ENCODE measurements at regions of chr2 and their contacts with region 1.

Region 1: GRCh38 chr2:48471048-48471474 is 58.9 kb upstream of the STON1 start:
- DNase-seq: peak; percentile 41
- H3K4me3 ChIP-seq: no peak overlapping the region
- H3K27me3 ChIP-seq: no peaks in the 10 kb centered on the region
- CTCF ChIP-seq: peak; percentile 68

Region 2: GRCh38 chr2:48414980-48415835 is 55.9 kb before region 1 on chr2:
- CTCF ChIA-PET with region 1: no interaction called
- POLR2A ChIA-PET with region 1: no interaction called
- DNase-seq: no peak
- H3K4me3 ChIP-seq: no peak overlapping the region
- H3K27me3 ChIP-seq: no peaks in the 10 kb centered on the region
- CTCF ChIP-seq: no peak

Region 3: GRCh38 chr2:48448274-48449061 is 22.6 kb before region 1 on chr2:
- CTCF ChIA-PET with region 1: interaction called, 11 read pairs
- POLR2A ChIA-PET with region 1: no interaction called
- DNase-seq: peak; percentile 76
- H3K4me3 ChIP-seq: no peak overlapping the region
- H3K27me3 ChIP-seq: no peaks in the 10 kb centered on the region
- CTCF ChIP-seq: no peak

Region 4: DNA sequence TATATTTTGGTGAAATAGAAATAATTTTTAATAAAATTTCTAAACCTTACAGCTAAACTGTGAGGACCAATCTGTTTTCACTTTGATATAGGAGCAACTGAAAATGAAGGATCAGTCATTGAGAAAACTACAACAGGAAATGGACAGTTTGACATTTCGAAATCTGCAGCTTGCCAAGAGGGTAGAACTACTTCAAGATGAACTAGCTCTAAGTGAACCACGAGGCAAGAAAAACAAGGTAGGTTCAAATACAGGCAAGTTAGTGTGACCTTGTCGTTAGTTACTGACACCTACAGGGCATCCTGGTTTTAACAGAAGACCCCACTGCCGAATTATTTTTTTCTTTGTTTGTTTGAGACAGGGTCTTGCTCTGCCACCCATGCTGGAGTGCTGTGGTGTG is 16.6 kb before region 1 on chr2:
- CTCF ChIA-PET with region 1: interaction called, 18 read pairs
- POLR2A ChIA-PET with region 1: no interaction called
- DNase-seq: no peak
- H3K4me3 ChIP-seq: no peak overlapping the region
- H3K27me3 ChIP-seq: no peaks in the 10 kb centered on the region
- CTCF ChIP-seq: no peak

Region 5: DNA sequence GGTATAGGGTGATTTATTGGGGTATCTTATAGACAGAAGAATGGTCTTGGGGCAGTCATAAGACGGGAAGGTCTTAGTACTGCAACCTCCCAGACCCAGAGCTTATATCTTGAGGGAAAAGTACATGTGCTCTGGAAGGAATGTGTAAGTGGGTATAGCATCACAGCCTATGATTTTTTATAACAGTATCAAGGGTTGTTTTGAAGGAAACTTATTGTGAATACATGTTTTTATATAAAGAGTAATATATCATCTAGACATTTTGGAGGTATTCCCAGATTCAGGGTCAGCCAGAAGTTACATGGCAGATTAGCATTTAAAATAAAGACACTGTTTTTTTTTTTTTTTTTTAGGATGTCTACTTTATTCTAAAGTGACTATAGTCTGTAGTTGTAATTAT is 11.3 kb after region 1 on chr2:
- CTCF ChIA-PET with region 1: interaction called, 13 read pairs
- POLR2A ChIA-PET with region 1: no interaction called
- DNase-seq: no peak
- H3K4me3 ChIP-seq: no peak overlapping the region
- H3K27me3 ChIP-seq: no peaks in the 10 kb centered on the region
- CTCF ChIP-seq: no peak

Region 6: GRCh38 chr2:48589170-48589767 is 118.2 kb after region 1 on chr2:
- CTCF ChIA-PET with region 1: interaction called, 15 read pairs
- POLR2A ChIA-PET with region 1: no interaction called
- DNase-seq: no peak
- H3K4me3 ChIP-seq: no peak overlapping the region
- H3K27me3 ChIP-seq: no peaks in the 10 kb centered on the region
- CTCF ChIP-seq: peak; percentile 77

Region 7: DNA sequence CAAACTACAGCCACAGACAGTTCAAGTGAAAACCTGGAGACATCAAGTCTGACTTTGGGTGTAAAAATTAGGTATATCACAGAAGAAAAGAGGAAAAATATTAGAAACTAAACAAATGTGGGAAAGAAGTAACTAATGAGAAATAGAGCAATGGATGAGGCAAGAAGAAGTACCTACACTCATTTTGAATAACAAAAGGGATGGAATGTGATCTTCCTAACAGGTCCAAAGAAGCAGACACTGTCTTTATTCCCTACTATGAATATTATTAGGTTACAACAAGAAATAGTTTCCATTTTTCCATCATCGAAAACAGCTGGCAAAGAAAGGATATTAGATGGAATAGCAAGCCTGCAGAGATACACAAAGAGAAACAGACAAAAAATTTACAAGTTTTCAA is 1169.6 kb after region 1 on chr2:
- CTCF ChIA-PET with region 1: no interaction called
- POLR2A ChIA-PET with region 1: no interaction called
- DNase-seq: no peak
- H3K4me3 ChIP-seq: no peak overlapping the region
- H3K27me3 ChIP-seq: no peaks in the 10 kb centered on the region
- CTCF ChIP-seq: no peak

Measured in BJ (cell line).